T-cell (primary cell): ENCODE measurements at regions of chr3 and their contacts with region 1.

Region 1: GRCh38 chr3:129120254-129121004 is 1.2 kb downstream of the RAB43 start:
- DNase-seq: peak; percentile 79 to 95 (median 91)
- ATAC-seq: peak; percentile 59 to 68 (median 64)
- H3K4me3 ChIP-seq: peak overlapping the region; percentile 97 to 98
- H3K4me3 Mint-ChIP-seq: peak overlapping the region; percentile 83 to 93 (median 90)
- H3K27ac ChIP-seq: peak overlapping the region; percentile 75
- H3K27ac Mint-ChIP-seq: peak overlapping the region; percentile 98 to 99
- H3K4me1 ChIP-seq: peaks cover 31 to 71% of the 10 kb centered on the region in 2 experiments
- H3K4me1 Mint-ChIP-seq: peaks cover 40 to 60% (median 58%) of the 10 kb centered on the region in 3 donors
- H3K27me3 ChIP-seq: no peaks in the 10 kb centered on the region
- H3K27me3 Mint-ChIP-seq: no peaks in the 10 kb centered on the region

Region 2: GRCh38 chr3:128426128-128426921 is 694.1 kb before region 1 on chr3:
- CTCF ChIA-PET with region 1: no interaction called
- POLR2A ChIA-PET with region 1: no interaction called
- DNase-seq: peak in 30 of 35 experiments; percentile 18 to 75 (median 40)
- ATAC-seq: peak; percentile 88 to 95 (median 92)
- H3K4me3 ChIP-seq: peak overlapping the region; percentile 13 to 36
- H3K4me3 Mint-ChIP-seq: no peak overlapping the region
- H3K27ac ChIP-seq: no peak overlapping the region
- H3K27ac Mint-ChIP-seq: no peak overlapping the region
- H3K4me1 ChIP-seq: peaks cover 0 to 8% of the 10 kb centered on the region in 2 experiments
- H3K4me1 Mint-ChIP-seq: no peaks in the 10 kb centered on the region
- H3K27me3 ChIP-seq: peaks cover 0 to 52% of the 10 kb centered on the region in 2 experiments
- H3K27me3 Mint-ChIP-seq: peaks cover 24 to 32% of the 10 kb centered on the region in 2 donors

Region 3: DNA sequence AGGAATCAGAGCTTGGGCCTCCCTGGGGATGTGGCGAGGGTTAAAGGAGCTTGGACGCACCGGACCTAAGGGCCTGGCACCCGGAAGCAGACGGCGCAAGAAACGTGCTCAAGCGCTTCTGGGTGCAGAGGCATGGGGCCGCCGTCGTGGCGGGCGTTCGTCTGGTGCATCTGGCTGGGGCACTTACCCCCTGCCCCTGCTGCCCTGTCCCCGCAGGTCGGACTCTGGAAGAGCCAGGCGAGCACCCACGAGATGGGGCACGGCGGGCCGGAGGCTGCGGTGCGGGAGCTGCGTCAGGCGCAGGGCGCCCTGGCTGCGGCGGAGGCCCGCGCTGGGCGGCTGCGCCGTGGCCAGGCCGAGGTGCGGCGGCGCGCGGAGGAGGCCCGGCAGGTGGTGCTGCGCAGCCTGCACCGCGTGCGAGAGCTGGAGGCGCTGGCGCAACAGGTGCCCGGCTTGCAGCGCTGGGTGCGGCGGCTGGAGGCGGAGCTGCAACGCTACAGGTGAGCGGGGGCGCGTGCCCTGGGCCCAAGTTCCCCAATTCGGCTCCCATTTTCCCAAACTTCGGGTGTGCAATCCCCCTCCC is 116.8 kb before region 1 on chr3:
- CTCF ChIA-PET with region 1: interaction called in 1 of 2 experiments, 10 read pairs
- POLR2A ChIA-PET with region 1: no interaction called
- DNase-seq: peak in 34 of 35 experiments; percentile 21 to 81 (median 48)
- ATAC-seq: peak; percentile 85 to 90 (median 90)
- H3K4me3 ChIP-seq: peak overlapping the region in 1 of 2 donors; percentile 15
- H3K4me3 Mint-ChIP-seq: peak overlapping the region; percentile 40 to 82 (median 62)
- H3K27ac ChIP-seq: no peak overlapping the region
- H3K27ac Mint-ChIP-seq: no peak overlapping the region
- H3K4me1 ChIP-seq: peaks cover 19 to 50% of the 10 kb centered on the region in 2 experiments
- H3K4me1 Mint-ChIP-seq: peaks cover 47 to 52% (median 48%) of the 10 kb centered on the region in 3 donors
- H3K27me3 ChIP-seq: peaks cover 0 to 45% of the 10 kb centered on the region in 2 experiments
- H3K27me3 Mint-ChIP-seq: peaks cover 14 to 33% of the 10 kb centered on the region in 2 donors

Region 4: GRCh38 chr3:129016356-129016719 is 104.1 kb before region 1 on chr3:
- CTCF ChIA-PET with region 1: interaction called, 4 to 10 read pairs
- POLR2A ChIA-PET with region 1: interaction called in 1 of 2 experiments, 3 read pairs
- DNase-seq: peak; percentile 42 to 85 (median 62)
- ATAC-seq: peak; percentile 80 to 91 (median 84)
- H3K4me3 ChIP-seq: peak overlapping the region in 1 of 2 donors; percentile 32
- H3K4me3 Mint-ChIP-seq: peak overlapping the region; percentile 50 to 81 (median 72)
- H3K27ac ChIP-seq: peak overlapping the region; percentile 84
- H3K27ac Mint-ChIP-seq: peak overlapping the region; percentile 95 to 99
- H3K4me1 ChIP-seq: peaks cover 26 to 43% of the 10 kb centered on the region in 2 experiments
- H3K4me1 Mint-ChIP-seq: peaks cover 46 to 61% (median 47%) of the 10 kb centered on the region in 3 donors
- H3K27me3 ChIP-seq: no peaks in the 10 kb centered on the region
- H3K27me3 Mint-ChIP-seq: no peaks in the 10 kb centered on the region

Region 5: GRCh38 chr3:129183569-129184395 is 63.4 kb after region 1 on chr3 and contains the start of gene CNBP:
- CTCF ChIA-PET with region 1: interaction called in 1 of 2 experiments, 3 read pairs
- POLR2A ChIA-PET with region 1: interaction called, 3 to 10 read pairs
- DNase-seq: peak; percentile 81 to 95 (median 90)
- ATAC-seq: peak; percentile 98 to 99 (median 98)
- H3K4me3 ChIP-seq: peak within 1 kb of the TSS; percentile 80 to 96
- H3K4me3 Mint-ChIP-seq: peak within 1 kb of the TSS; percentile 95 to 97 (median 96)
- H3K27ac ChIP-seq: peak within 1 kb of the TSS; percentile 85
- H3K27ac Mint-ChIP-seq: peak within 1 kb of the TSS; percentile 97
- H3K4me1 ChIP-seq: peaks cover 28 to 39% of the 10 kb centered on the region in 2 experiments
- H3K4me1 Mint-ChIP-seq: peaks cover 36 to 44% (median 43%) of the 10 kb centered on the region in 3 donors
- H3K27me3 ChIP-seq: no peaks in the 10 kb centered on the region
- H3K27me3 Mint-ChIP-seq: no peaks in the 10 kb centered on the region
- total RNA-seq, gene CNBP: 280 to 382 (median 356) TPM

Region 6: GRCh38 chr3:129864519-129864918 is 744.1 kb after region 1 on chr3:
- CTCF ChIA-PET with region 1: no interaction called
- POLR2A ChIA-PET with region 1: no interaction called
- DNase-seq: no peak
- ATAC-seq: no peak
- H3K4me3 ChIP-seq: no peak overlapping the region
- H3K4me3 Mint-ChIP-seq: no peak overlapping the region
- H3K27ac ChIP-seq: no peak overlapping the region
- H3K27ac Mint-ChIP-seq: no peak overlapping the region
- H3K4me1 ChIP-seq: no peaks in the 10 kb centered on the region
- H3K4me1 Mint-ChIP-seq: peaks cover 39 to 40% (median 39%) of the 10 kb centered on the region in 3 donors
- H3K27me3 ChIP-seq: no peaks in the 10 kb centered on the region
- H3K27me3 Mint-ChIP-seq: no peaks in the 10 kb centered on the region